ENCODE measurements at regions of chr18 and their contacts with region 1.

Region 1: DNA sequence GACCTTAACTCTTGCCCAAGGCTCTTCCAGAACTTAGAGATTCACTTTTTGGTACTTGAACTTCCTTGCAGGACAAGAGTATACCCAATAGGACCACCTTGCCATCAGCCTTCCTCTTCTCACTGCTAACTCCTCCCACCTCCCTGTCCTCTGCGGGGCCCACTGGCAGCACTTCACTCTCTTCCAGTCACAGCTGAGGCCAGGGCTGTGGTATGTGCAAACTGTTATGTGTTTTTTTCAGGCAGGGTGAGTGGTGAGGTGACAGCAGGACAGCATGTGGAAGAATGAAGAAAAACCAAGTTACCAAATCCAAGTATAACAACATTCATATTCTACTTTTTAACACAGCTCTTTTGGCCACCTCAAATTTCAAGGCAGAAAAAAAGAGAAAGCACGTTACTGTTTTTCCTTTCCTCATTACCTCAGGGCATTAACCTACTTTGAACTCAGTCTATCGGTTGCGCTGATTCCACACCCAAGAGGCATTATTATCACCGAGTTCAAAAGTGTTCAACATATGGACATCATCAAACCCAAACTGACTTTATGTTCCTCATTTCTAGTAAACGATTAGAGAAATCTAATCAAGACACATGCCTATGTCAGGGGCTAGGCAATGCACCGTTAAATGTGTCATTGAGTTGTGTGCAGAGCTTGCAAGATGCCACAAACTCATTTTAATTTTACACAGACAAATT is 605.2 kb upstream of the SYT4 start:
- DNase-seq: peak; percentile 47
- H3K4me3 ChIP-seq: no peak overlapping the region
- H3K27ac ChIP-seq: no peak overlapping the region
- H3K4me1 ChIP-seq: no peaks in the 10 kb centered on the region
- H3K27me3 ChIP-seq: no peaks in the 10 kb centered on the region
- CTCF ChIP-seq: no peak
- POLR2A ChIP-seq: no peak

Region 2: GRCh38 chr18:43812627-43813026 is 69.9 kb before region 1 on chr18:
- intact Hi-C with region 1: no loop called
- DNase-seq: no peak
- H3K4me3 ChIP-seq: no peak overlapping the region
- H3K27ac ChIP-seq: no peak overlapping the region
- H3K4me1 ChIP-seq: no peaks in the 10 kb centered on the region
- H3K27me3 ChIP-seq: no peaks in the 10 kb centered on the region
- CTCF ChIP-seq: no peak
- POLR2A ChIP-seq: no peak

Region 3: GRCh38 chr18:43827311-43827710 is 55.2 kb before region 1 on chr18:
- intact Hi-C with region 1: loop called (anchors 10 kb)
- DNase-seq: no peak
- H3K4me3 ChIP-seq: no peak overlapping the region
- H3K27ac ChIP-seq: no peak overlapping the region
- H3K4me1 ChIP-seq: no peaks in the 10 kb centered on the region
- H3K27me3 ChIP-seq: no peaks in the 10 kb centered on the region
- CTCF ChIP-seq: no peak
- POLR2A ChIP-seq: no peak

Measured in spleen (tissue), 13 donors.